ENCODE measurements at regions of chr9 and their contacts with region 1.

Region 1: DNA sequence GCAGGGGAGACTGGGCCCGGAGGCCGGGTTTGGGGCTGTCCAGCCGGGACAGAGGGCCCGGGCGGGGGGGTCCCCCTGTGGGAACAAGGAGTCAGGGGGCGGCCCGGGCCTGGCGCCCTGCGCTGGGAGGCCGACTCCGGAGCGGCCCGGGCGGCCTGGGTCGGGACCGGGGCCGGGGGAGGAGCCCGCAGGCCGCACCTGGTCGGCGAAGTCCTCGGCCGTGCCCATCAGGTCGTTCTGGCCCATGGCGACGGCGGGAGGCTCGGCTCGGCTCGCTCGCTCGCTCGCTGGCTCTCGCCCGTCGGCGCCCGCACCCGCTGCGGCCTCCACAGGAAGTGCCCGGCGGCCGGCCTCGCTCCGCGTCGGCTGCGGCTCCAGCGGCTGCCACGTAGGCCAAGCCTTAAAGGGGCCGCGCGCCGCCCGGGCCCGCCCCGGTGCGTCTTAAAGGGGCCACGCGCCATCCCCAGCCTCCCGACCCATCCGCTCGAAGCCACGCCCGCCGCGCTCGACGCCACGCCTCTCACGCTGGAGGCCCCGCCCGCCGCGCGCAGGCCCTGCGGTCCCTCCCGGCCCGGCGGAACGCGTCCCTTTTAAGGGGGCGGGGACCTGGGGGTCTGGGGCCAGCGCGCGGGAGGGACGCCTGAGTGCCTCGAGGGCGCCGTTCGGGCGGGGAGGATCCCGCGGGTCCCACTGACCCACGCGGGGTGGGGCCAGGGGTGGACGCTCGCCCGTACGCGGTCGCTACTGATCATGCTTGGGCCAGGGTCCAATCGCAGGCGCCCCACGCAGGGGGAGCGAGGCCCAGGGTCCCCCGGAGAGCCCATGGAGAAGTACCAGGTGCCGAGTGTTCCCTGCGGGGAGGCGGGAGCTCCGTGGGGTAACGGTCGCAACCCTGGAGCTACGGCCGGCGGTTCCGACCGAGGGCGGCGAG is at the starts of genes STKLD1 and SURF4:
- DNase-seq: peak; percentile 86 to 99 (median 93)
- ATAC-seq: peak; percentile 95
- H3K4me3 ChIP-seq: peak within 1 kb of the TSS; percentile 58
- H3K4me3 Mint-ChIP-seq: peak within 1 kb of the TSS; percentile 84 to 98 (median 92)
- H3K27ac ChIP-seq: peak within 1 kb of the TSS; percentile 98
- H3K27ac Mint-ChIP-seq: peak within 1 kb of the TSS; percentile 72 to 99 (median 96)
- H3K4me1 ChIP-seq: peaks cover 31 to 38% of the 10 kb centered on the region in 2 donors
- H3K4me1 Mint-ChIP-seq: peaks cover 26 to 47% (median 34%) of the 10 kb centered on the region in 7 donors
- H3K27me3 ChIP-seq: no peaks in the 10 kb centered on the region
- H3K27me3 Mint-ChIP-seq: peaks cover 0 to 4% (median 0%) of the 10 kb centered on the region in 5 donors
- total RNA-seq, gene STKLD1: 1.1 to 1.8 (median 1.5) TPM
- total RNA-seq, gene SURF4: 72.5 to 196 (median 75.1) TPM

Region 2: DNA sequence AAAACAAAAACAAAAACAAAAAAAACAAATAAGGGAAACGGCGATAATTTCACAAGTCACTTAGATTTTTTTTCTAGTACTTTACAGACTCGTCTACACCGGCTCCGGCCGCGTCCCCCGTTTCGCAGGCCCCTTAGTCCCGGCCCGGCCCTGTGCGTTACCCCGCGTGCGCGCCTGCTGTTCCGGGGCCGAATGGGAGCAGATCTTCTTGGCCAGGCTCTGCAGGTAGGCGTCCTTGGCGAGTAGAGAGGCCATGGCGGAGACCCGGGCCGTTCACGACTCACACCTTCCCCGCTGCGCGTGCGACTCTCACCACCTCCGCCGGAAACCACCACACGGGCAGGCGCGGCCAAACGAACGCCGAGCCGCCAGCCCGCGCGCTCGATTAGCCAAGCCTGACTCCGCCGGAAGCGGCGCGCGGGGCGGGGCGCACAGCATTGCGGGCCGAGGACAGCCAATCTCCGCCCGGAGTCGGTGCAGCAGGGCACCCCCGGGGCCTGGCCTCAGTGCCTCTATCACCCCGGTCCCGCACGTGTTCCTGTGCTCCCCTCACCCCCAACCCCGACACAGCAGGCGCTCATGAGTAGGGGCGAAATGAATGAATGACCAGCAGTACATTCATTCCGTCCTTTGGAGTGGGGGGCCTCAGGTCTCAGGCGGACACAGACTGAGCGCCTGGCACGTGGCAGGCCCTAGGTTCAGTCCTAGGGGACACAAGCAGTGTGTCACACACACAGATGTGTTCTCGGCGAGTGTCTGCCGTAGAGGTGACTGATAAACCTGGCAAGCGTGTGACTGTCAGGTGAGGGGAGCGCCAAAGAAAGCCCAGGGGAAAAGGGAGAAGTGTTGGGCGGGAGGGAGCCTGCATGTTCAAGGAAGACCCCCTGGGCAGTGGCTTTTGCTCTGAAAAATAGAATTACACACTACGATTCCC is 39.8 kb before region 1 on chr9 and contains the start of gene SURF6:
- CTCF ChIA-PET with region 1: interaction called, 4 read pairs
- POLR2A ChIA-PET with region 1: interaction called, 5 read pairs
- intact Hi-C with region 1: loop called (anchors 1 kb)
- DNase-seq: peak; percentile 90 to 96 (median 93)
- ATAC-seq: peak; percentile 98
- H3K4me3 ChIP-seq: peak within 1 kb of the TSS; percentile 92
- H3K4me3 Mint-ChIP-seq: peak within 1 kb of the TSS; percentile 93 to 98 (median 96)
- H3K27ac ChIP-seq: peak within 1 kb of the TSS; percentile 82
- H3K27ac Mint-ChIP-seq: peak within 1 kb of the TSS; percentile 90 to 96 (median 94)
- H3K4me1 ChIP-seq: peaks cover 21 to 31% of the 10 kb centered on the region in 2 donors
- H3K4me1 Mint-ChIP-seq: peaks cover 22 to 59% (median 38%) of the 10 kb centered on the region in 7 donors
- H3K27me3 ChIP-seq: no peaks in the 10 kb centered on the region
- H3K27me3 Mint-ChIP-seq: no peaks in the 10 kb centered on the region
- total RNA-seq, gene SURF6: 15.4 to 33.5 (median 23.4) TPM

Region 3: DNA sequence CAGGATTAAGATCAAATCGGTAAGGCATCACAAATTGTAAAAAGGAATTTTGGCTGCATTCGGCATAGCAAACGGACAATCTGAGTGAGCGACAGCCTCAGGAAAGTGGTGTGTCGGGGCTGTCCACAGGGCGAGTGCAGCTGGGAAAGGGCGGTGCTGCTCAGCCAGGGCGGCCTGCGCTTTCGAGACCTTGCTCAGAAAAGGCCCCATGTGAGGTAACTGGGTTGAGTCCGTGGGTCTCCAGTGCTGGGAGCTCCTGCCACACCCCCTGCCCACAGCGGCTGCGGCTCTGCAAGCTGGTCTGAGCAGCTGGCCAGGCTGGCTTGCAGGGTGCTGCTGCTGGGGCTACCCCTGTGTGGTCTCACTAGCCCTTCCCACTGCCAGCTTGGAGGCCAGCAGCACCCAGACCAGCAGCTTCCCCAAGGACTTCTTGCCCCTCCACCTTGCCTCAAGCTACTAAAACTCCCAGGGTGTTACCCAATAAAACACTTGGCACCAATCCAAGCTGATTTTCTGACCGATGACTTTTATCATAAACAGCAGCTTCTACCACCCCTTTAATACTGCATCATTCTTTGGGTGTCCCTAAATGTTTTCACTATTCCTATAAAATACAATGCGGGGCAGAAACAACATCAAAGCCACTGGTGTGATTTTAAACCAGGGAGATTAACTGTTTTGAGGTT is 13.5 kb before region 1 on chr9:
- CTCF ChIA-PET with region 1: interaction called, 14 read pairs
- POLR2A ChIA-PET with region 1: interaction called, 185 read pairs
- intact Hi-C with region 1: loop called in 1 of 2 experiments (anchors 2 kb)
- DNase-seq: no peak
- ATAC-seq: no peak
- H3K4me3 ChIP-seq: no peak overlapping the region
- H3K4me3 Mint-ChIP-seq: no peak overlapping the region
- H3K27ac ChIP-seq: no peak overlapping the region
- H3K27ac Mint-ChIP-seq: no peak overlapping the region
- H3K4me1 ChIP-seq: peaks cover 7 to 15% of the 10 kb centered on the region in 2 donors
- H3K4me1 Mint-ChIP-seq: peaks cover 20 to 31% (median 26%) of the 10 kb centered on the region in 7 donors
- H3K27me3 ChIP-seq: no peaks in the 10 kb centered on the region
- H3K27me3 Mint-ChIP-seq: no peaks in the 10 kb centered on the region

Region 4: GRCh38 chr9:133417541-133418461 is 41.8 kb after region 1 on chr9 and contains the start of gene REXO4:
- CTCF ChIA-PET with region 1: no interaction called
- POLR2A ChIA-PET with region 1: no interaction called
- intact Hi-C with region 1: loop called (anchors 1 to 2 kb)
- DNase-seq: peak; percentile 73 to 88 (median 84)
- ATAC-seq: peak; percentile 93
- H3K4me3 ChIP-seq: peak within 1 kb of the TSS; percentile 87
- H3K4me3 Mint-ChIP-seq: peak within 1 kb of the TSS; percentile 88 to 93 (median 91)
- H3K27ac ChIP-seq: peak within 1 kb of the TSS; percentile 80
- H3K27ac Mint-ChIP-seq: peak within 1 kb of the TSS; percentile 81 to 94 (median 91)
- H3K4me1 ChIP-seq: peaks cover 13 to 14% of the 10 kb centered on the region in 2 donors
- H3K4me1 Mint-ChIP-seq: peaks cover 32 to 60% (median 54%) of the 10 kb centered on the region in 7 donors
- H3K27me3 ChIP-seq: no peaks in the 10 kb centered on the region
- H3K27me3 Mint-ChIP-seq: peaks cover 0 to 3% (median 0%) of the 10 kb centered on the region in 5 donors
- total RNA-seq, gene REXO4: 17.8 to 44.1 (median 28.6) TPM

Region 5: GRCh38 chr9:134024828-134025605 is 649.0 kb after region 1 on chr9 and contains the start of gene BRD3OS:
- CTCF ChIA-PET with region 1: no interaction called
- POLR2A ChIA-PET with region 1: no interaction called
- intact Hi-C with region 1: loop called in 1 of 2 experiments (anchors 5 kb)
- DNase-seq: peak; percentile 80 to 95 (median 91)
- ATAC-seq: peak; percentile 98
- H3K4me3 ChIP-seq: peak within 1 kb of the TSS; percentile 89
- H3K4me3 Mint-ChIP-seq: peak within 1 kb of the TSS; percentile 61 to 85 (median 80)
- H3K27ac ChIP-seq: peak within 1 kb of the TSS; percentile 75
- H3K27ac Mint-ChIP-seq: peak within 1 kb of the TSS; percentile 48 to 86 (median 78)
- H3K4me1 ChIP-seq: peaks cover 5 to 7% of the 10 kb centered on the region in 2 donors
- H3K4me1 Mint-ChIP-seq: peaks cover 0 to 21% (median 12%) of the 10 kb centered on the region in 7 donors
- H3K27me3 ChIP-seq: no peaks in the 10 kb centered on the region
- H3K27me3 Mint-ChIP-seq: no peaks in the 10 kb centered on the region
- total RNA-seq, gene BRD3OS: 8.3 to 19.3 (median 12.7) TPM